Activated CD8-positive, alpha-beta T cell treated with anti-CD3 and anti-CD28 coated beads, Interleukin-2, amount 10 ng/mL, durations not matched to agents 7 days and 5 days (primary cell): ENCODE measurements at regions of chr5 and their contacts with region 1.

Region 1: GRCh38 chr5:170338933-170339779 is 41.6 kb upstream of the LCP2 start:
- DNase-seq: peak; percentile 78
- ATAC-seq: peak; percentile 68
- H3K4me3 Mint-ChIP-seq: no peak overlapping the region
- H3K27ac Mint-ChIP-seq: peak overlapping the region; percentile 20
- H3K4me1 Mint-ChIP-seq: peaks cover 41% of the 10 kb centered on the region
- H3K27me3 Mint-ChIP-seq: no peaks in the 10 kb centered on the region

Region 2: DNA sequence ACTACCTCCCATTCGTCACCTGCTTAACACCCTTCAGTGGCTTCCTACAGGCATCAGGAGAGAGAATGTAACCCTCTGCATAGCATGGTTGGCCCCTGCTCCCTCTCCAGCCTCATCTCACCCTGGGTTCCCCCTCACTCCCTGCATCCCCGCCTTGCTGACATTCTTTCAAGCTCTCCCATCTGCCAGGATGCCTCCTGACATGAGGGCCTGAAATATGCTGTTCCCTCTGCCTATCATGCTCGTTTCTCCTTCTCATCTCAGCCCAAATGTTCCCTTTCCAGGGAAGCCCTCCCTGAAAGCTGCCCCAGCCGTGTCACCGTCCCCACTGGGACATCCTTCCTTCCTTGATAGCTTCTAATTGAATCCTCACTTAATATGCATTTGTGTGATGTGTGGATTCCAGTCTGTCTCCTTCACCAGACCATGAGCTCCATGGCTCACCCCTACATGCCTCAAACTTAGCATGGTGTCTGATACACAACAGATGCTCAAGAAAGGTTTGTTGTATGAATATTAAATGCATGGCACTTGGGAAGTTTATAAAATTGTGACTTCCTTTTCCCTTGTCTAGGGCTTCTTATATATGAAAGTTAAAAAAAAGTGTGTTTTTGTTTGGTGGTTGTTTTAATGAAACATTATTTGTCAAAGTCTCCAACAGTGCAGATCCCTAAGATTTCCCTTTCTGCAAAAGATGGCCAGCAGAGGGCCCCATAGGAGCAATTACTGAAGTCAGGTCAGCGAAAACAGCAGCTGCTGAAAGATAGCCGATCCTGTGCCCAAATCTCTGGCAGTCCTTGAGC is 113.6 kb before region 1 on chr5:
- CTCF ChIA-PET with region 1: interaction called, 130 read pairs
- POLR2A ChIA-PET with region 1: interaction called, 6 read pairs
- DNase-seq: peak; percentile 86
- ATAC-seq: peak; percentile 68
- H3K4me3 Mint-ChIP-seq: no peak overlapping the region
- H3K27ac Mint-ChIP-seq: no peak overlapping the region
- H3K4me1 Mint-ChIP-seq: peaks cover 4% of the 10 kb centered on the region
- H3K27me3 Mint-ChIP-seq: no peaks in the 10 kb centered on the region

Region 3: DNA sequence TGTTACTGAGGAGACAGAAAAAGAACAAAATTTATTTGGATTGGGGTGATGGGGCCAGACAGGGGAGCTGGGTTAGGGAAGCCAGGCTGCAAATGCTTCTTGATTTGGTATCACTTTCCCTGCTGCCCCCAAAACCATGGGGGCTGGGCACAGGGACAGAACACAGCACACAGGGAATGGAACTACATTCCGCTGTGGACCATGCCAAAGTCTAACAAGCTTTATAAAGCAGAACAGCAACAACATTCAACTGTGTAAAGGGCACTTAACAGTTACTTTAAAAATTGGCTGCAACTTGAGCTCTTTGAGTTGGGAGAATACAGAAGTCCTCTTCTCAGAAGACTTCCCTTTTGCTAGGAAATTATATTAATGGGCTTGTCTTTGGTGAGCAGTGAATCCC is 82.6 kb before region 1 on chr5:
- CTCF ChIA-PET with region 1: interaction called, 30 read pairs
- POLR2A ChIA-PET with region 1: no interaction called
- DNase-seq: no peak
- ATAC-seq: no peak
- H3K4me3 Mint-ChIP-seq: no peak overlapping the region
- H3K27ac Mint-ChIP-seq: peak overlapping the region; percentile 83
- H3K4me1 Mint-ChIP-seq: peaks cover 92% of the 10 kb centered on the region
- H3K27me3 Mint-ChIP-seq: no peaks in the 10 kb centered on the region

Region 4: GRCh38 chr5:170267431-170268152 is 71.6 kb before region 1 on chr5:
- CTCF ChIA-PET with region 1: interaction called, 208 read pairs
- POLR2A ChIA-PET with region 1: interaction called, 15 read pairs
- DNase-seq: peak; percentile 89
- ATAC-seq: peak; percentile 59
- H3K4me3 Mint-ChIP-seq: peak overlapping the region; percentile 62
- H3K27ac Mint-ChIP-seq: peak overlapping the region; percentile 90
- H3K4me1 Mint-ChIP-seq: peaks cover 97% of the 10 kb centered on the region
- H3K27me3 Mint-ChIP-seq: no peaks in the 10 kb centered on the region

Region 5: DNA sequence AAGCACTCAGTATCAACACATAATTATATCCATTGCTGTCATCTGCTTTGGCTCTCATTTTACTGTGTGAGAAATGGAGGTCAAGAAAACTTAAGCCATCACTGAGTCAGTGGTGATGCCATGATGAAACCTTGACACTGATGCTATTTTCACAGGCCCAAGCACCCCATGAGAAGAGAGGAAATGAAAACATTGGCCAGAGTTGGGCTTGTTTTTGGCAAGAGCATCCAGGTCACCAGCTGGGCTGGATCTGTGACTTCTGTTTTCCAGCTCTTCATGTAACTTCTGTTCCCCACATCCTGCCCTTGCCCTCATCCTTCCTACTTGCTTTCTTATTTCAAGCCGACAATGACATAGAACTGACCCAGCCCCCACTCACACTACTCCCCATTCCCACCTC is 51.6 kb before region 1 on chr5:
- CTCF ChIA-PET with region 1: interaction called, 226 read pairs
- POLR2A ChIA-PET with region 1: interaction called, 432 read pairs
- DNase-seq: no peak
- ATAC-seq: peak; percentile 12
- H3K4me3 Mint-ChIP-seq: peak overlapping the region; percentile 55
- H3K27ac Mint-ChIP-seq: peak overlapping the region; percentile 85
- H3K4me1 Mint-ChIP-seq: peaks cover 100% of the 10 kb centered on the region
- H3K27me3 Mint-ChIP-seq: no peaks in the 10 kb centered on the region

Region 6: GRCh38 chr5:170302653-170303501 is 36.3 kb before region 1 on chr5:
- CTCF ChIA-PET with region 1: interaction called, 226 read pairs
- POLR2A ChIA-PET with region 1: interaction called, 432 read pairs
- DNase-seq: peak; percentile 77
- ATAC-seq: peak; percentile 95
- H3K4me3 Mint-ChIP-seq: peak overlapping the region; percentile 80
- H3K27ac Mint-ChIP-seq: peak overlapping the region; percentile 96
- H3K4me1 Mint-ChIP-seq: peaks cover 76% of the 10 kb centered on the region
- H3K27me3 Mint-ChIP-seq: no peaks in the 10 kb centered on the region

Region 7: GRCh38 chr5:170319301-170319700 is 19.9 kb before region 1 on chr5:
- CTCF ChIA-PET with region 1: interaction called, 14 read pairs
- POLR2A ChIA-PET with region 1: interaction called, 3 read pairs
- DNase-seq: no peak
- ATAC-seq: no peak
- H3K4me3 Mint-ChIP-seq: no peak overlapping the region
- H3K27ac Mint-ChIP-seq: peak overlapping the region; percentile 65
- H3K4me1 Mint-ChIP-seq: peaks cover 13% of the 10 kb centered on the region
- H3K27me3 Mint-ChIP-seq: no peaks in the 10 kb centered on the region